ENCODE measurements at regions of chr1 and their contacts with region 1.

Region 1: DNA sequence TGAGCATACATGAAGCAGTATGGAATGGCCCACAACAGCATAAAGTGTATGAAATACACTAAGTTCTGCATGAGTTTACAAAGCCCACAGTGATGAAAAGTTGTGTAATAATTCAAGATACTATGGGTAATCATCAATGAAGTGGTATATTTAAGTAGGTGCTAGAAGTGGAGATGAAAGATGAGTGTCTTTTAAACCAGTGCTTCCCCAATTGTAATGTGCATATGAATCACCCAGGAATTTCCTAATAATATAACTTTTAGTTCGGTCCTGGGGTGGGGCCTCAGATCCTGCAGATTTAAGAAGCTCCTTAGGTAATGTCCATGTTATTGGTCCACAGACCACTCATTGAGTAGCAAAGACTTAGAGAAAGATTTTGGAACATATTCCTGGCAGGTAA is 184.9 kb downstream of the DUSP10 start:
- DNase-seq: no peak
- ATAC-seq: no peak
- H3K4me3 ChIP-seq: no peak overlapping the region
- H3K27ac ChIP-seq: no peak overlapping the region
- H3K4me1 ChIP-seq: no peaks in the 10 kb centered on the region
- H3K27me3 ChIP-seq: no peaks in the 10 kb centered on the region

Region 2: DNA sequence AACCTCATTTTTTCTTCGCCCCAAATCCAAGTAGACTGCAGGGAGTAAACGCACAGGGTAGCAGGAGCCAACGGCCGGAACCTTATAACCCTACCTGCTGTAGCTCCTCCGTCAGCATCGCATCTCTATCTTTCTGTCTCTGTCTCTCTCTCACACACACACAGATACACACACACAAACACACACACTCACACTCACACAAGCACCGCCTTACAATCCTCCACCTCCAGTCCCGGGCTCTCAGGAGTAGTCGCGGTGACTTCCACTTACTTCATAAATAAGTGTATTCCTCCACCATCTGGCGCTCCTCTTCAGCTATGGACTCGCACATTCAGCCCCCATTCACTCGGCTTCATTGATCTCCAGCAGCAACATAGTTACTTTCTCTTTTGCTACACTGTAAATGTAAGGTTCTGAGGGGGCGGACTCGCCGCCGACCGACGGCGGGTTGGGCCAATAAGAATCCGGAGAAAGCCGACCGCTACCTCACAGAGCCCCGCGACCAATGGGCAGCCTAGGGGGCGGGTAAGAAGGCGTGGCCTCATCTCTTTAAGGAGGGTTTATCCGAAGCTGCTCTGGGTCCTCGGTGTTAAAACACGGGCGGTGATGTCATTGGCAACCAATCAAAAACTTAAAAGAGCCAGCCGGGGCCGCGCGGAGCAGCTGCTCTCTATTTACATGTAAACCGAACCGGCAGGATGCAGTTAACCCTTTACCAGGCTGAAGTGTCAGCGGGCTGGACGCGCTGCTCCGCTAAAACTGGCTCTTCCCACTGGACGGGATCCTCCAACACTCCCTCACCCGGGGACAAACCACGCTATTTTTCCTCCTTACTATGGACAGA is 184.9 kb after region 1 on chr1 and contains the start of gene DUSP10:
- intact Hi-C with region 1: loop called in 1 of 4 experiments (anchors 10 kb)
- DNase-seq: peak; percentile 98 to 99 (median 99)
- ATAC-seq: peak; percentile 97 to 98
- H3K4me3 ChIP-seq: peak within 1 kb of the TSS; percentile 72
- H3K27ac ChIP-seq: peak within 1 kb of the TSS; percentile 86
- H3K4me1 ChIP-seq: peaks cover 1% of the 10 kb centered on the region
- H3K27me3 ChIP-seq: no peaks in the 10 kb centered on the region
- total RNA-seq, gene DUSP10: 4.6 to 5.1 (median 4.9) TPM